ENCODE measurements at regions of chr4 and their contacts with region 1.

Region 1: DNA sequence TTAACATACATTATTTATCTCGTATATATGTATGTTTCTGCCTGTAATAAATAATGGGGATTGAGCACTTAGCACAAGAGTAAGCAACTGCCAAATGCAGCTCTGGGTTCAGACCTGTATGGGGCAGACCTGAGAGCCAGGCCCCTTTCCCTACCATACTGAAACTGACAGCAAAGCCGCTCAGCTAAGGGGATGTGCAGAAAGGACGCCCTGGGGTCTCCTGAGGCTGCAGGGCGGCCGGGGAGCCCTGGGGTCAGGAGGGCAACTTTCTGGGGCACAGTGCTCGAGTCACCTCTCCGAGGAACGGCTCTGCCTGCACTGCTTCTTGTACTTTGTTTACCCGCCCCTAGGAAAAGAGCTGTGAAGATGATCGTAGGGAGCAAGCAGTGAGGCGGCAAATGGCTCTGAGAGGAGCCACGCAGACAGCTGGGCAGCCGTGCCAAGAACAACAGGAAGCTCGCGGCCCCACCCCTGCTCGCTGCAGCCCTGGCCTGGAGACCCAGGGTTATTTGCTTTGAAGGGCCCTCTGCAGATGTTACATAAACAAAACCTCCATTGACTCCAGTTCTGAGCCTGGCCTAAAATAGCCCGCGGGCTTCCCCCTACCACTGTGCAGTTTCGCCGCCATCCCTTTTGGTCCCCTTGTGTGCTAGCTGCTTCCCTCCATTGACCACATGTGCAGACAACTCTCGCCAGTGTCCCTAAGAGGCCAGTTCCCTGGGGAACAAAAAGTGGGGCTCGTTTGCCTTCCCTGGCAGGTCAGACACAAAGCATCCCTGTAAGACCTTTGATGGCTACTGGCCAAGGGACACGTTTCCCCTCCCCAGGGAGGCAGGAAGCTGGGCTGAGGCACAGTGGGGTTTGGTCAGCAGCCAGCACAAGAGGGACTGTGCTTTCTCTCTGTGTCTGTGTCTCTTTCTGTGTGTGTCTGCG is 111.3 kb upstream of the LNX1 start:
- DNase-seq: peak; percentile 89 to 92
- H3K4me3 ChIP-seq: no peak overlapping the region
- H3K27ac ChIP-seq: peak overlapping the region; percentile 72 to 88 (median 80)
- H3K4me1 ChIP-seq: peaks cover 20 to 41% of the 10 kb centered on the region in 2 donors
- H3K27me3 ChIP-seq: no peaks in the 10 kb centered on the region
- CTCF ChIP-seq: no peak
- POLR2A ChIP-seq: no peak

Region 2: DNA sequence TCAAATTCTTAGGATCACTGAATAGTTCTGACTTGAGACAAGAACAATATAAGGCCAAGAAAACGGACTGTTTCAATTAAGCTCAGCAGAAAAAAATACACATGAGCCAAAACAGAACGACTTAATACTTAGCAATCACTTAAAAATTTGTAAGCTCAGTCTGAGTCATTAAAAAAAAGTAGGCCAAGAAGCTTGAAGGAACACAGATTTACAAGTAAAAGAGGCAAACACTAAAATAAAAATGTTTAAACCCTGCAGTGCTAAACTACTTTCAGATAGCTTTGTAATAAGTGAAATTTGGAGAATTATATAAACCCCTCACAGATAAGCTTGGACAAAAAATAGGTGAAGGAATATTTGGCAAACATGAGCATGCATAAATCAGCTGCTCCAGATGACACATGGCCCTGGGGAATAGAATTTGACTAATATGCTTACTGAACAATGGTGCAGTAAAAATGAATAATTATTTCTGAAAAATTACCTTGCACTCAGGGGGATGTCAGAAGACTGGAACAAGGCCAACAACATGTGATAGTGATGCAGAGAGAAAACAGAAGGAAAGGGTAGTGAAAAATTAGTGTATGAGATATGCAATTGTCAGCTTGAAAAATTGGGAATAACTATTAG is 160.9 kb before region 1 on chr4:
- intact Hi-C with region 1: no loop called
- DNase-seq: no peak
- H3K4me3 ChIP-seq: no peak overlapping the region
- H3K27ac ChIP-seq: peak overlapping the region; percentile 58 to 84 (median 73)
- H3K4me1 ChIP-seq: peaks cover 41 to 47% of the 10 kb centered on the region in 2 donors
- H3K27me3 ChIP-seq: no peaks in the 10 kb centered on the region
- CTCF ChIP-seq: no peak
- POLR2A ChIP-seq: no peak

Region 3: GRCh38 chr4:53908661-53909078 is 206.1 kb after region 1 on chr4:
- intact Hi-C with region 1: loop called (anchors 10 kb)
- DNase-seq: peak; percentile 27 to 29
- H3K4me3 ChIP-seq: no peak overlapping the region
- H3K27ac ChIP-seq: no peak overlapping the region
- H3K4me1 ChIP-seq: peaks cover 7 to 18% of the 10 kb centered on the region in 2 donors
- H3K27me3 ChIP-seq: no peaks in the 10 kb centered on the region
- CTCF ChIP-seq: peak in 5 of 6 experiments; percentile 28 to 75 (median 68)
- POLR2A ChIP-seq: no peak

Region 4: GRCh38 chr4:54015423-54016030 is 312.9 kb after region 1 on chr4:
- intact Hi-C with region 1: no loop called
- DNase-seq: no peak
- H3K4me3 ChIP-seq: no peak overlapping the region
- H3K27ac ChIP-seq: no peak overlapping the region
- H3K4me1 ChIP-seq: no peaks in the 10 kb centered on the region
- H3K27me3 ChIP-seq: no peaks in the 10 kb centered on the region
- CTCF ChIP-seq: no peak
- POLR2A ChIP-seq: no peak

Region 5: GRCh38 chr4:54228056-54228527 is 525.5 kb after region 1 on chr4:
- intact Hi-C with region 1: loop called (anchors 10 kb)
- DNase-seq: peak; percentile 62 to 70
- H3K4me3 ChIP-seq: peak overlapping the region in 2 of 3 donors; percentile 7 to 32
- H3K27ac ChIP-seq: peak overlapping the region in 1 of 3 donors; percentile 41
- H3K4me1 ChIP-seq: peaks cover 47 to 66% of the 10 kb centered on the region in 2 donors
- H3K27me3 ChIP-seq: peaks cover 53% of the 10 kb centered on the region
- CTCF ChIP-seq: peak; percentile 17 to 70 (median 50)
- POLR2A ChIP-seq: no peak

Measured in thyroid gland (tissue), 4 donors.